ENCODE measurements at regions of chr1 and their contacts with region 1.

Region 1: GRCh38 chr1:206982216-206982615 is 12.0 kb upstream of the FCAMR start:
- DNase-seq: no peak
- ATAC-seq: peak; percentile 98
- H3K4me3 ChIP-seq: no peak overlapping the region
- H3K27ac ChIP-seq: no peak overlapping the region
- H3K4me1 ChIP-seq: no peaks in the 10 kb centered on the region
- H3K27me3 ChIP-seq: no peaks in the 10 kb centered on the region; a peak in 1 of 4 replicates
- CTCF ChIP-seq: peak; percentile 85 to 94 (median 92)
- EP300 ChIP-seq: no peak
- POLR2A ChIP-seq: no peak
- RAD21 ChIP-seq: peak; percentile 97

Region 2: DNA sequence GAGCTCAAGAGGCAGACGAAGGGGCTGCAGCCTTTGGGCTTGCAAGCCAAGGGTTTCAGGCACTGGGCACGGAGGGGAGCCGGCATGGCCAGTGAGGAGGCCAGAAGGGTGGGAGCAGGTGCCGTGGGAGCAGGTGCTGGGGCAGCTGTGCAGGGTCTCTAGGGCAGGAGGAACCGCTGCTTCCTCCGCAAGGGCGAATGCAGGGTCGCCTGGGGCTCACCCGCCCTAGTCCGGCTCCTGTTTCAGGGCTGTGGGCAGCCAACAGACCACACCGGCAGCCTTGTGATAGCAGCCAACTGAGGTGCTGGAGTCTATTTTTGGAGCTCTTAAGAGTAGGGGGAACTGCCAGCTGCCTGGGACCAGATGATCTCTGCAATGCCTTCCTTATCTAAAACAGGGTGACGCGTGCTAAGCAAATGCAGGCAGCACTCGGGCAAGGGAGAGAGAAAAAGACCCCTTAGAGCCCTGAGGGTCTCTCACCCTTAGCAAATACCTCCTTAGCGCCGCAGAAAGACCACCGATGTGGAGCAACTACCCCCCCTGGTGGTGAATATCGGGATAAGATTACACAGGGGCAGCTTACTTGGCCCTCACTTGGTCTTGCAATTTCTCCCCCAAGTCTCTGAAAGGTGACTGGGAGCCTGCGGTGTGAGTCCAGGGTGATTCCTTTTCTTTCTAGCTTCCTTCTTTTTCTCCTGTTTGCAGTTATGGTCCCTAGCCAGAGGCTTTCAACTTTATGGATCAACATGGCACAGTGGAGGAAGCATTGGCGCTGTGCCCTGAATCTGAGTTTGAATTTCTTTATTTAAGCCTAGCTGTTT is 318.2 kb before region 1 on chr1:
- CTCF ChIA-PET with region 1: interaction called, 55 read pairs
- POLR2A ChIA-PET with region 1: no interaction called
- RAD21 ChIA-PET with region 1: interaction called, 22 read pairs
- SMC1A ChIA-PET with region 1: interaction called, 16 read pairs
- in situ Hi-C with region 1: no loop called
- intact Hi-C with region 1: no loop called
- DNase-seq: no peak
- ATAC-seq: peak; percentile 94
- H3K4me3 ChIP-seq: peak overlapping the region; percentile 44; the same call in 1 of the 2 replicates
- H3K27ac ChIP-seq: no peak overlapping the region
- H3K4me1 ChIP-seq: peaks cover 10% of the 10 kb centered on the region
- H3K27me3 ChIP-seq: no peaks in the 10 kb centered on the region
- CTCF ChIP-seq: peak; percentile 81 to 85 (median 84)
- EP300 ChIP-seq: no peak
- POLR2A ChIP-seq: no peak
- RAD21 ChIP-seq: peak; percentile 89

Region 3: DNA sequence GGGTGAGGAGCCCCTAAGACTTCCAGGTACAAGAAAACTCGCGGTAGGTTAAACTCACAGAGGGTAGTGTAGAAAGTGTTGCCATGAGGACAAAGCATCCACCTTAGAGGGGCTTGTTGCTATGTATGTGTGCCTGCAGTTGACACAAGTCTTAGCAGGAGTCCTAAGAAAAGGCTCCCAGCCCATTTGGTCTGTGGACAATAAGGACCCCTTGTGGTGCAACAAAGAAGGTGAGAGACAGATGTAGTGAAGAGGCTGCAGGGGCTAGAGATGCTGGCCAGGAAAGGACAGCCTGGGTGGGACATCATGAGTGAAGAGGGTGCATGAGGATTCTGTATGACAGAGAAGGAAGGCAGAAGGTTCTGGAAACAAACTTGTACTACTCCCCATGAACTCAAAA is 173.6 kb before region 1 on chr1:
- CTCF ChIA-PET with region 1: interaction called, 198 read pairs
- POLR2A ChIA-PET with region 1: no interaction called
- RAD21 ChIA-PET with region 1: interaction called, 79 read pairs
- SMC1A ChIA-PET with region 1: interaction called, 120 read pairs
- in situ Hi-C with region 1: loop called (anchors 5 kb)
- intact Hi-C with region 1: loop called (anchors 1 kb)
- DNase-seq: no peak
- ATAC-seq: peak; percentile 99
- H3K4me3 ChIP-seq: no peak overlapping the region
- H3K27ac ChIP-seq: no peak overlapping the region
- H3K4me1 ChIP-seq: peaks cover 11% of the 10 kb centered on the region
- H3K27me3 ChIP-seq: no peaks in the 10 kb centered on the region
- CTCF ChIP-seq: peak; percentile 69 to 92 (median 70)
- EP300 ChIP-seq: no peak
- POLR2A ChIP-seq: no peak
- RAD21 ChIP-seq: peak; percentile 99

Region 4: DNA sequence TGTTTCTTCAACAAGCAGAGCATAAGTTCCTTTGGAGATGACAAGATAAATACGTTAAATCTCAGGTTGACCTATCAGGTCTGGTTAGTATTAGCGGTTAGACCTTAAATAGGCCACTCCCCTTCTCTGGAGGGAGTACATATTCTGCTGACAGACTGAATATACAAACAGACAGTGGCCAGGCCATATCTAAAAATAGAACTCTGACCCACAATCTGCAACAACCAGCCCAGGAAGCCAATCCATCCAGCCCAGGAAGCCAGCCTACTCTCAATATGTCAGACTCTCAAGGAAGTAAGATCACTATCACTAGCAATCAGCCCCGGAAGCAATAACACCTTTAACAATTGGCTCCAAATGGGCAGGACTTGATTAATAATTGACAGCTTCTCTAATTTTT is 110.1 kb before region 1 on chr1:
- CTCF ChIA-PET with region 1: interaction called, 100 read pairs
- POLR2A ChIA-PET with region 1: no interaction called
- RAD21 ChIA-PET with region 1: interaction called, 4 read pairs
- SMC1A ChIA-PET with region 1: interaction called, 3 read pairs
- in situ Hi-C with region 1: loop called (anchors 5 kb)
- intact Hi-C with region 1: no loop called
- DNase-seq: no peak
- ATAC-seq: no peak
- H3K4me3 ChIP-seq: no peak overlapping the region
- H3K27ac ChIP-seq: no peak overlapping the region
- H3K4me1 ChIP-seq: no peaks in the 10 kb centered on the region
- H3K27me3 ChIP-seq: no peaks in the 10 kb centered on the region; a peak in 1 of 4 replicates
- CTCF ChIP-seq: no peak
- EP300 ChIP-seq: no peak
- POLR2A ChIP-seq: no peak
- RAD21 ChIP-seq: no peak

Region 5: GRCh38 chr1:206941858-206942387 is 40.3 kb before region 1 on chr1:
- CTCF ChIA-PET with region 1: interaction called, 314 read pairs
- POLR2A ChIA-PET with region 1: interaction called, 3 read pairs
- RAD21 ChIA-PET with region 1: interaction called, 192 read pairs
- SMC1A ChIA-PET with region 1: interaction called, 148 read pairs
- in situ Hi-C with region 1: no loop called
- intact Hi-C with region 1: no loop called
- DNase-seq: no peak
- ATAC-seq: no peak
- H3K4me3 ChIP-seq: no peak overlapping the region
- H3K27ac ChIP-seq: no peak overlapping the region
- H3K4me1 ChIP-seq: no peaks in the 10 kb centered on the region
- H3K27me3 ChIP-seq: no peaks in the 10 kb centered on the region
- CTCF ChIP-seq: no peak
- EP300 ChIP-seq: no peak
- POLR2A ChIP-seq: no peak
- RAD21 ChIP-seq: no peak

Region 6: DNA sequence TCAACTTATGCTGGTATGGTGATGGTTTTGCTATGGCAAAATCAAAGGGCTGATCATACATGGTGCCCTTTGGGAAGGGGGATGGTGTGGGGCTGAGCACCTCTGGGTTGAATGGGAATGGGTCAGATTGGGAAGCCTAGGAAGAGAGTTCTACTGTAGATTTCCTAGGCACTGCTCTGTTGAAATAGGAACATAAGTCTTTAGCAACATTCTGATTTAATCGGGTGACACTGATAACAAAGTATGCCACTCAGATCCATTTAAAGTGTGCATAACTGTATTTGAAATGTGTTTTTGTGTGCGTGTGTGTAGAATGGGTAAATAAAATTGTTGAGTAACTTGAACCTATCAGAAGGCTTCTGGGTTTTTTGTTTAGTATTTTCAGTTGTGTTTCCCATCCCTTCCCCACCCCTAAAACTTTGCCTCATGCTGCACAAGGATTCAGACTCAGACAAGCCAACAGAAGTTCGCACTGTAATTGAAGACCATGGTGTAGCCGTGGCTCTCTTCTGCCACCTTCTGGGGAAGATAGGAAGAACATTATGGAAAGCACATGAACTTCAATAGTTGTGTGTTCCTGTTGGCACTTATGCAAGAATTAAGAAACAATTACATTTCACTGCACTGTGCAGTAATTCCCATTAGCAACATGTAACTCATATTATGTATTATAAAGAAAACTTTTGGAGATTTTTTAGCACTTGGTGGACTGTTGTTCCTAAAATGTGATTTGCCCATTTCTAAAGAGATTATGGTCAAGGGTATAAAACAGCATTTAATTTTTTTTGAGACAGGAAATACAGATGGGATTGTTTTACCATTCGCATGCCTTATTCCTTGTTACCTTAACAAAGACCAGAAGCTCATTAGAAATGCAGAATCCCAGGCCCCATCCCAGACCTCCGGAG is 95.5 kb after region 1 on chr1:
- CTCF ChIA-PET with region 1: interaction called, 4 read pairs
- POLR2A ChIA-PET with region 1: no interaction called
- RAD21 ChIA-PET with region 1: interaction called, 3 read pairs
- SMC1A ChIA-PET with region 1: interaction called, 3 read pairs
- in situ Hi-C with region 1: no loop called
- intact Hi-C with region 1: loop called (anchors 1 kb)
- DNase-seq: peak; percentile 53
- ATAC-seq: peak; percentile 94
- H3K4me3 ChIP-seq: no peak overlapping the region
- H3K27ac ChIP-seq: no peak overlapping the region
- H3K4me1 ChIP-seq: no peaks in the 10 kb centered on the region
- H3K27me3 ChIP-seq: no peaks in the 10 kb centered on the region
- CTCF ChIP-seq: peak; percentile 85 to 95 (median 92); a peak in 5 of 6 replicates
- EP300 ChIP-seq: no peak
- POLR2A ChIP-seq: no peak
- RAD21 ChIP-seq: peak; percentile 94

Region 7: GRCh38 chr1:207218512-207219362 is 236.5 kb after region 1 on chr1:
- CTCF ChIA-PET with region 1: no interaction called
- POLR2A ChIA-PET with region 1: no interaction called
- RAD21 ChIA-PET with region 1: no interaction called
- SMC1A ChIA-PET with region 1: no interaction called
- in situ Hi-C with region 1: no loop called
- intact Hi-C with region 1: no loop called
- DNase-seq: no peak
- ATAC-seq: no peak
- H3K4me3 ChIP-seq: no peak overlapping the region
- H3K27ac ChIP-seq: no peak overlapping the region
- H3K4me1 ChIP-seq: peaks cover 13% of the 10 kb centered on the region
- H3K27me3 ChIP-seq: no peaks in the 10 kb centered on the region
- CTCF ChIP-seq: no peak
- EP300 ChIP-seq: no peak
- POLR2A ChIP-seq: no peak
- RAD21 ChIP-seq: no peak

Measured in GM12878 (cell line).